Mammary epithelial cell (primary cell): ENCODE measurements at regions of chr22 and their contacts with region 1.

Region 1: DNA sequence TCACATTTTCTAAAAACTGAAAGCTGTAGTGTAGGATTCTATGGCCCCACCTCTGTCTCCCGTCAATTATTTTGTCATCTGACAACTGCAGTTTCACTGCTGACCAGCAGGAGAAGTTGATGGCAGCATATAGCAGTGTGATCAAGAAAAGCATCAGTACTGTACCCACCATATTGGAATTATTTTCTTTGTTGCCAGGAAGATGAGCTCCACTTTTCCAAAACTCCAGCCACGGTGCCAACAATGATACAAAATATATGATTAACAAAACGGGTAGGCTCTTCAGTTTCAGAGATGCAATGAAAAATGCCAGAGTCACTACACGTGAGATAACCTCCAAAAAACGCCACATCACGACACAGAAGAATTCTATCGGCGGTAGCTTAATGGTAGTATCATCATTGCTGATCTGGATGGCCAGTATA is 41.3 kb downstream of the XKR3 start:
- DNase-seq: no peak
- H3K4me3 ChIP-seq: no peak overlapping the region
- H3K27ac ChIP-seq: no peak overlapping the region
- H3K4me1 ChIP-seq: no peaks in the 10 kb centered on the region
- H3K27me3 ChIP-seq: no peaks in the 10 kb centered on the region
- CTCF ChIP-seq: peak; percentile 27 to 28

Region 2: GRCh38 chr22:16866167-16866566 is 82.2 kb after region 1 on chr22:
- CTCF ChIA-PET with region 1: no interaction called
- dilution Hi-C with region 1: no loop called
- in situ Hi-C with region 1: no loop called
- intact Hi-C with region 1: no loop called
- DNase-seq: no peak
- H3K4me3 ChIP-seq: no peak overlapping the region
- H3K27ac ChIP-seq: no peak overlapping the region
- H3K4me1 ChIP-seq: no peaks in the 10 kb centered on the region
- H3K27me3 ChIP-seq: peaks cover under 1% of the 10 kb centered on the region
- CTCF ChIP-seq: no peak

Region 3: GRCh38 chr22:17477391-17477833 is 693.5 kb after region 1 on chr22:
- CTCF ChIA-PET with region 1: no interaction called
- dilution Hi-C with region 1: no loop called
- in situ Hi-C with region 1: loop called in 1 of 2 experiments (anchors 25 kb)
- intact Hi-C with region 1: no loop called
- DNase-seq: peak; percentile 14
- H3K4me3 ChIP-seq: peak overlapping the region; percentile 13 to 41 (median 24)
- H3K27ac ChIP-seq: no peak overlapping the region
- H3K4me1 ChIP-seq: no peaks in the 10 kb centered on the region
- H3K27me3 ChIP-seq: no peaks in the 10 kb centered on the region
- CTCF ChIP-seq: no peak